Activated T-helper 1 cell treated with anti-CD3 and anti-CD28 coated beads, Interleukin-12 subunit alpha, Interleukin-12 subunit beta, Interleukin-2, Interleukin-4 antibody, amounts not matched to agents 30 ng/mL and 10 ng/mL and 1 ng/mL, durations not matched to agents 14 hours and 24 hours and 36 hours (primary cell): ENCODE measurements at regions of chr3 and their contacts with region 1.

Region 1: GRCh38 chr3:57169872-57170623 is 4.9 kb upstream of the IL17RD start:
- DNase-seq: peak; percentile 33
- H3K4me3 Mint-ChIP-seq: peak overlapping the region; percentile 64
- H3K27ac Mint-ChIP-seq: no peak overlapping the region
- H3K4me1 Mint-ChIP-seq: peaks cover 5% of the 10 kb centered on the region
- H3K27me3 Mint-ChIP-seq: peaks cover 52% of the 10 kb centered on the region

Region 2: GRCh38 chr3:56928379-56929068 is 241.5 kb before region 1 on chr3:
- intact Hi-C with region 1: no loop called
- DNase-seq: no peak
- H3K4me3 Mint-ChIP-seq: no peak overlapping the region
- H3K27ac Mint-ChIP-seq: no peak overlapping the region
- H3K4me1 Mint-ChIP-seq: peaks cover 68% of the 10 kb centered on the region
- H3K27me3 Mint-ChIP-seq: no peaks in the 10 kb centered on the region

Region 3: GRCh38 chr3:57100046-57100695 is 69.9 kb before region 1 on chr3:
- intact Hi-C with region 1: loop called (anchors 5 kb)
- DNase-seq: peak; percentile 31
- H3K4me3 Mint-ChIP-seq: no peak overlapping the region
- H3K27ac Mint-ChIP-seq: no peak overlapping the region
- H3K4me1 Mint-ChIP-seq: no peaks in the 10 kb centered on the region
- H3K27me3 Mint-ChIP-seq: peaks cover 2% of the 10 kb centered on the region

Region 4: GRCh38 chr3:57127891-57128518 is 42.0 kb before region 1 on chr3:
- intact Hi-C with region 1: no loop called
- DNase-seq: no peak
- H3K4me3 Mint-ChIP-seq: no peak overlapping the region
- H3K27ac Mint-ChIP-seq: no peak overlapping the region
- H3K4me1 Mint-ChIP-seq: no peaks in the 10 kb centered on the region
- H3K27me3 Mint-ChIP-seq: peaks cover 10% of the 10 kb centered on the region

Region 5: GRCh38 chr3:57555738-57556458 is 385.9 kb after region 1 on chr3 and contains the start of gene PDE12:
- intact Hi-C with region 1: loop called (anchors 2 kb)
- DNase-seq: peak; percentile 78
- H3K4me3 Mint-ChIP-seq: peak within 1 kb of the TSS; percentile 100
- H3K27ac Mint-ChIP-seq: peak within 1 kb of the TSS; percentile 100
- H3K4me1 Mint-ChIP-seq: peaks cover 47% of the 10 kb centered on the region
- H3K27me3 Mint-ChIP-seq: no peaks in the 10 kb centered on the region
- total RNA-seq, gene PDE12: 34.7 and 34.9 TPM in 2 replicates